Psoas muscle (tissue), 8 donors: ENCODE measurements at regions of chr16 and their contacts with region 1.

Region 1: GRCh38 chr16:1428511-1428910 is 2.4 kb upstream of the PERCC1 start:
- DNase-seq: peak in 1 of 2 donors; percentile 64
- ATAC-seq: peak in 2 of 4 donors; percentile 9 to 49
- H3K4me3 ChIP-seq: peak overlapping the region; percentile 5
- H3K27ac ChIP-seq: no peak overlapping the region
- H3K4me1 ChIP-seq: no peaks in the 10 kb centered on the region
- H3K27me3 ChIP-seq: no peaks in the 10 kb centered on the region
- CTCF ChIP-seq: no peak

Region 2: GRCh38 chr16:1474796-1475551 is 46.5 kb after region 1 on chr16 and contains the start of gene CLCN7:
- intact Hi-C with region 1: loop called in 1 of 2 experiments (anchors 10 kb)
- DNase-seq: peak; percentile 94 to 96
- ATAC-seq: peak; percentile 95 to 99 (median 98)
- H3K4me3 ChIP-seq: peak within 1 kb of the TSS; percentile 91
- H3K27ac ChIP-seq: peak within 1 kb of the TSS; percentile 96
- H3K4me1 ChIP-seq: peaks cover 17% of the 10 kb centered on the region
- H3K27me3 ChIP-seq: no peaks in the 10 kb centered on the region
- CTCF ChIP-seq: no peak
- total RNA-seq, gene CLCN7: 41.2 to 65.4 (median 46.2) TPM